CD4-positive, alpha-beta T cell (primary cell): ENCODE measurements at regions of chr1 and their contacts with region 1.

Region 1: DNA sequence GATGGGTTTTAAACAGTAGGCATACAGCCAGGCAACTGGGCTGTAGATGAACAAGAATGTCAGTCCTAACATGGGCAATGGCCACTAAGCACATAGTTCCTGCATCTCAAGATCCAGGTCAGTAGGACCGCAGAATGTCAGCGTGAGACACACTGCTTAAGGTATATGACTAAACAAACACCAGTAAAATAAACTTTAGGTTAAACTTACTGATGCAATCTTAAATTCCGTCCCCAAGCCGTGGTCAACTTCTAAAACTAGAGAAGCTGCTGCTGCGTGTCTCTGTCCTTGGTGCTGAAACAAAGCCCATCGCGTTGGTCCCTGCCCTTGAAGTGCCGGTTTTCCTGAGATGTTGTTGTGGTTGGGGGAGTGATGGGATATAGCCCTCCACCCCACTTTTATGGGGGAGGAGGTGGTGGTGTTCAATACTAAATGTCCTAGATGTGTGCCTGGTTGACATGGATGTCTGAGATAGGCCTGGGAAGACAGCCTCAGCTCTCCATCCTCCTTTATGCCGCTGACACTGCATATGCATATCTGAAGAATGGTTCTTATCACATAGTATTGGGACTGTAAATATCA is 71.9 kb upstream of the KCNA3 start:
- DNase-seq: peak; percentile 34 to 82 (median 46)
- ATAC-seq: no peak
- H3K4me3 ChIP-seq: no peak overlapping the region
- H3K4me3 Mint-ChIP-seq: no peak overlapping the region
- H3K27ac ChIP-seq: no peak overlapping the region
- H3K27ac Mint-ChIP-seq: no peak overlapping the region
- H3K4me1 ChIP-seq: peaks cover 2% of the 10 kb centered on the region
- H3K4me1 Mint-ChIP-seq: no peaks in the 10 kb centered on the region
- H3K27me3 ChIP-seq: peaks cover 0 to 11% of the 10 kb centered on the region in 2 experiments
- H3K27me3 Mint-ChIP-seq: peaks cover 32% of the 10 kb centered on the region
- CTCF ChIP-seq: no peak

Region 2: GRCh38 chr1:109282952-109283747 is 1463.5 kb before region 1 on chr1 and contains the start of gene PSRC1:
- CTCF ChIA-PET with region 1: no interaction called
- POLR2A ChIA-PET with region 1: no interaction called
- intact Hi-C with region 1: no loop called
- DNase-seq: peak; percentile 81 to 94 (median 85)
- ATAC-seq: peak; percentile 93
- H3K4me3 ChIP-seq: peak within 1 kb of the TSS; percentile 70
- H3K4me3 Mint-ChIP-seq: peak within 1 kb of the TSS; percentile 94
- H3K27ac ChIP-seq: peak within 1 kb of the TSS; percentile 31 to 59
- H3K27ac Mint-ChIP-seq: peak within 1 kb of the TSS; percentile 78
- H3K4me1 ChIP-seq: peaks cover 27% of the 10 kb centered on the region
- H3K4me1 Mint-ChIP-seq: peaks cover 19% of the 10 kb centered on the region
- H3K27me3 ChIP-seq: no peaks in the 10 kb centered on the region
- H3K27me3 Mint-ChIP-seq: no peaks in the 10 kb centered on the region
- CTCF ChIP-seq: peak; percentile 71
- total RNA-seq, gene PSRC1: 0.22 to 0.91 TPM

Region 3: DNA sequence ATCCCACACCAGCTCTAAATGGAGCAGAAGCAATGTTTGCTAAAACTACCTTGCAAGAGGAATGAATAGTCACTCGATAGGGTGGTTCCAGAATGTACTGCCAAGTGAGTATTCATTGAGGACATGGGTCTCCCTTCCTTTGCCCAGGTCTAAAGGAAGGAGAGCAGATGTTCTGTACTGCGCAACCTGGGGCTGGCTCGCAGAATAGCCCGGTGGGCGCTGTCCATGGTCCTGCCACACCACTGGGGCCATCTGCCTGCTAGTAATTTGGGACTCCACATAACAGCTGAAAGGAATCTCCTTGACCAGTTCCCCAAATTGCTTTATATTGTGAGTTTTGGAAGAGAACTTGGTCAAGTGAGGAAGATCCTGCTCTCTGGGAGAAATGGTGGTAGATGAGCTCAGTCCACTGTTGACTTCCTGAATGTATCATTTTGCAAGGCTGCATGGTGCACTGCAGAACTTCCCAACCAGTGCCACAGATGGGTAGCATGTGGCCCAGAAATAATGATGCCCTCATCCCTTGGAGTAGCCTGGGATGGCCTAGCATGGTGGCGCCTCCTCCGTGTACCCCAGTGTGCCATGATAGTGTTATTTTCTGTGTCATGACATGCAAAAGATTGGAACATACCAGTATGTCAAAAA is 590.7 kb before region 1 on chr1:
- CTCF ChIA-PET with region 1: no interaction called
- POLR2A ChIA-PET with region 1: no interaction called
- intact Hi-C with region 1: loop called in 1 of 2 experiments (anchors 10 kb)
- DNase-seq: peak in 13 of 14 experiments; percentile 15 to 56 (median 31)
- ATAC-seq: no peak
- H3K4me3 ChIP-seq: no peak overlapping the region
- H3K4me3 Mint-ChIP-seq: no peak overlapping the region
- H3K27ac ChIP-seq: no peak overlapping the region
- H3K27ac Mint-ChIP-seq: no peak overlapping the region
- H3K4me1 ChIP-seq: peaks cover under 1% of the 10 kb centered on the region
- H3K4me1 Mint-ChIP-seq: no peaks in the 10 kb centered on the region
- H3K27me3 ChIP-seq: peaks cover 43 to 55% of the 10 kb centered on the region in 2 experiments
- H3K27me3 Mint-ChIP-seq: peaks cover 84% of the 10 kb centered on the region
- CTCF ChIP-seq: no peak

Region 4: DNA sequence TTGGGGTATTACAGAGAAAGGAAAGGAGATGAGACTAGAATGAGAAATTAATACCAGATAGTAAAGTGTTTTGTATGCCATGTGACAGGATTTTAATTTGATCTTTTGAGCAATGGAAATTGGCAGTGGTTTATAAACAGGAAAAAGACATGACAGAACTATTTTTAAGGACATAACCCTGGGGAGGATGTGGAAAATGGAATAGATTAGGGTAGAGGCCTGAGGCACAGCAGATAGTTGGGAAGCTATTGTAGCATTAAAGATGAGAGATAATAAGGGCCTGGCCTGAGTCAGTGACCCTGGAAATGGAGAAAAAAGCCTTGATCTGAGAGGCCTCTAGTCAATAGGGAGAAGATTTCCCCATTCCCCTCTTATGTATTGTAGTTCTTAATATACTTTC is 49.9 kb before region 1 on chr1:
- CTCF ChIA-PET with region 1: no interaction called
- POLR2A ChIA-PET with region 1: no interaction called
- intact Hi-C with region 1: loop called in 1 of 2 experiments (anchors 5 kb)
- DNase-seq: no peak
- ATAC-seq: no peak
- H3K4me3 ChIP-seq: no peak overlapping the region
- H3K4me3 Mint-ChIP-seq: no peak overlapping the region
- H3K27ac ChIP-seq: no peak overlapping the region
- H3K27ac Mint-ChIP-seq: no peak overlapping the region
- H3K4me1 ChIP-seq: no peaks in the 10 kb centered on the region
- H3K4me1 Mint-ChIP-seq: no peaks in the 10 kb centered on the region
- H3K27me3 ChIP-seq: no peaks in the 10 kb centered on the region
- H3K27me3 Mint-ChIP-seq: peaks cover 5% of the 10 kb centered on the region
- CTCF ChIP-seq: no peak

Region 5: GRCh38 chr1:110783292-110783918 is 36.7 kb after region 1 on chr1:
- CTCF ChIA-PET with region 1: no interaction called
- POLR2A ChIA-PET with region 1: no interaction called
- intact Hi-C with region 1: no loop called
- DNase-seq: peak; percentile 27 to 87 (median 44)
- ATAC-seq: peak; percentile 70
- H3K4me3 ChIP-seq: no peak overlapping the region
- H3K4me3 Mint-ChIP-seq: no peak overlapping the region
- H3K27ac ChIP-seq: no peak overlapping the region
- H3K27ac Mint-ChIP-seq: peak overlapping the region; percentile 65
- H3K4me1 ChIP-seq: peaks cover 64% of the 10 kb centered on the region
- H3K4me1 Mint-ChIP-seq: peaks cover 82% of the 10 kb centered on the region
- H3K27me3 ChIP-seq: no peaks in the 10 kb centered on the region
- H3K27me3 Mint-ChIP-seq: no peaks in the 10 kb centered on the region
- CTCF ChIP-seq: peak; percentile 98